MCF 10A (cell line): ENCODE measurements at regions of chr10 and their contacts with region 1.

Region 1: GRCh38 chr10:132421392-132421877 is 24.4 kb downstream of the PWWP2B start:
- DNase-seq: peak; percentile 45
- H3K4me3 Mint-ChIP-seq: no peak overlapping the region
- H3K27ac Mint-ChIP-seq: peak overlapping the region; percentile 78
- H3K4me1 Mint-ChIP-seq: peaks cover 18% of the 10 kb centered on the region
- H3K27me3 Mint-ChIP-seq: no peaks in the 10 kb centered on the region
- CTCF ChIP-seq: no peak

Region 2: GRCh38 chr10:132223156-132223590 is 198.3 kb before region 1 on chr10:
- CTCF ChIA-PET with region 1: no interaction called
- POLR2A ChIA-PET with region 1: no interaction called
- intact Hi-C with region 1: no loop called
- DNase-seq: peak; percentile 79
- H3K4me3 Mint-ChIP-seq: no peak overlapping the region
- H3K27ac Mint-ChIP-seq: no peak overlapping the region
- H3K4me1 Mint-ChIP-seq: no peaks in the 10 kb centered on the region
- H3K27me3 Mint-ChIP-seq: no peaks in the 10 kb centered on the region
- CTCF ChIP-seq: peak; percentile 90

Region 3: DNA sequence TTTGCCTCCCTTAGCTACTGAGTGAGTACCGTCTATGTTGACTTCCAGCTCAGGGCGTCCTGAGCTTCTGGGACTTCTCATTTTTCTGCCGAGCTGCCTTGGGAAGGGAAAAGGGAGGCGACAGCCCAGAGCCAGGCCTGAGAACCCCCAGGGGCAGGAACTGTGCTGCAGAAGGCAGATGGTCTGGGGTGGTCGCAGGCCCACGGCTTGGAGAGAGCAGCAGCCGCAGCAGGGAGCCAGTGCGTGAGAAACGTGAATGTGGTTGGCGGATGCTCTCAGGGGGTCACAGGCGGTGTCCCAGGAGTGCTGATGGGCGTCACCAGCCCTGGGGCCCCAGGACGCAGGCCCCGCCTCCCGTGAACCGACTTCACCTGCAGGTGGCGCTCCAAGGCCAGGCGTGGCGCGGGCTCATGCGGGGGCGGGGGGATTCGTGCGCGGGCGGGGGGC is 33.6 kb before region 1 on chr10:
- CTCF ChIA-PET with region 1: interaction called, 8 read pairs
- POLR2A ChIA-PET with region 1: no interaction called
- intact Hi-C with region 1: loop called (anchors 2 kb)
- DNase-seq: peak; percentile 44
- H3K4me3 Mint-ChIP-seq: no peak overlapping the region
- H3K27ac Mint-ChIP-seq: no peak overlapping the region
- H3K4me1 Mint-ChIP-seq: no peaks in the 10 kb centered on the region
- H3K27me3 Mint-ChIP-seq: no peaks in the 10 kb centered on the region
- CTCF ChIP-seq: peak; percentile 56

Region 4: GRCh38 chr10:132396495-132397035 is 24.9 kb before region 1 on chr10:
- CTCF ChIA-PET with region 1: interaction called, 9 read pairs
- POLR2A ChIA-PET with region 1: interaction called, 17 read pairs
- intact Hi-C with region 1: loop called (anchors 2 kb)
- DNase-seq: peak; percentile 34
- H3K4me3 Mint-ChIP-seq: peak overlapping the region; percentile 81
- H3K27ac Mint-ChIP-seq: no peak overlapping the region
- H3K4me1 Mint-ChIP-seq: peaks cover 11% of the 10 kb centered on the region
- H3K27me3 Mint-ChIP-seq: no peaks in the 10 kb centered on the region
- CTCF ChIP-seq: peak; percentile 21

Region 5: DNA sequence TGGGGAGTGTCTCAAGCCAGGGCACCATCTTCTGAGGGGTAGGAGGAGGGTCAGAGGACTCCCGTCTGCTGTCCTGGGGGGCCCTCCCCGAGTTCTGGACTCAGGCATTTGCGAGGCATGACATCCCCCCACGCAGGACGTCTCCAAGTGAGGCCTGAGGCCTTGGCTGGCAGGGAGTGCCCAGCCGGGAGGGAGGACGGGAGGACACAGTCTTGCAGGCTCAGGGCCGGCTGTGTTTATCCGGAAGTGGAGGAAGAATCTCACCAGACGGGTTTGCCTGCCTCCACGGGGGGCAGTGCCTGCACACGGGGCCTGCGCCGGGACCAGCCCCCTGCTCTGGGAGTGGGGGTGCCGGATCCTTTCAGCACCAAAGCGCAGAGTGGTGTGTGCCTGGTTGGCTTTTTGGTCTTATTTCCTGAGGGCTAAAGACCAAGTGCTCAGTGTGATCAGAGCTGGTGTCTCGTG is 13.6 kb before region 1 on chr10:
- CTCF ChIA-PET with region 1: interaction called, 3 read pairs
- POLR2A ChIA-PET with region 1: interaction called, 4 read pairs
- intact Hi-C with region 1: loop called (anchors 1 kb)
- DNase-seq: no peak
- H3K4me3 Mint-ChIP-seq: no peak overlapping the region
- H3K27ac Mint-ChIP-seq: peak overlapping the region; percentile 69
- H3K4me1 Mint-ChIP-seq: no peaks in the 10 kb centered on the region
- H3K27me3 Mint-ChIP-seq: no peaks in the 10 kb centered on the region
- CTCF ChIP-seq: no peak

Region 6: GRCh38 chr10:132446661-132447194 is 25.3 kb after region 1 on chr10:
- CTCF ChIA-PET with region 1: interaction called, 26 read pairs
- POLR2A ChIA-PET with region 1: interaction called, 32 read pairs
- intact Hi-C with region 1: no loop called
- DNase-seq: peak; percentile 94
- H3K4me3 Mint-ChIP-seq: peak overlapping the region; percentile 41
- H3K27ac Mint-ChIP-seq: peak overlapping the region; percentile 97
- H3K4me1 Mint-ChIP-seq: peaks cover 30% of the 10 kb centered on the region
- H3K27me3 Mint-ChIP-seq: no peaks in the 10 kb centered on the region
- CTCF ChIP-seq: peak; percentile 47